Endothelial cell of umbilical vein (primary cell): ENCODE measurements at regions of chr9 and their contacts with region 1.

Region 1: GRCh38 chr9:16133556-16134227 is 580.8 kb downstream of the CCDC171 start:
- DNase-seq: peak; percentile 61
- H3K4me3 ChIP-seq: no peak overlapping the region
- H3K27ac ChIP-seq: no peak overlapping the region
- H3K4me1 ChIP-seq: no peaks in the 10 kb centered on the region
- H3K27me3 ChIP-seq: peaks cover 0 to 3% of the 10 kb centered on the region in 2 experiments
- CTCF ChIP-seq: peak; percentile 62 to 65
- POLR2A ChIP-seq: no peak

Region 2: DNA sequence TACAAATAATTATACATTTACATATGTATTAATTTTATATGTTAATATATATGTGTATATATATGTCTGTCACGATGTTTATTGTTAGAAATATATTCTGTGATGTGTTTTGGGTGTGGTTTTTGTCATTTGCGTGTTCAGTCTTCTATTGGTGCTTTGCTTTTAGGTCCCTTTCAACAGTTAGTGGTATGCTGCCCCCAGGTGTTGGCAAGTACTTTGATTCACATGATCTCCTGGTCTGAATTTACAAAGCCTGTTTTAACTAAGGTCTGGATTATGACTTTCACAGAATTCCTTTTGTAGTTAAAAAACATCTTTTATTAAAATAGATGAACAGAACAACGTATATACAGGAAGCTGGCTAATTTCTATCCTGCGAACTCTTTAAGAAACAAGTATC is 309.4 kb before region 1 on chr9:
- CTCF ChIA-PET with region 1: no interaction called
- POLR2A ChIA-PET with region 1: no interaction called
- dilution Hi-C with region 1: no loop called
- intact Hi-C with region 1: no loop called
- DNase-seq: peak; percentile 23
- H3K4me3 ChIP-seq: no peak overlapping the region
- H3K27ac ChIP-seq: no peak overlapping the region
- H3K4me1 ChIP-seq: no peaks in the 10 kb centered on the region
- H3K27me3 ChIP-seq: no peaks in the 10 kb centered on the region
- CTCF ChIP-seq: no peak
- POLR2A ChIP-seq: no peak

Region 3: GRCh38 chr9:15837079-15837679 is 296.5 kb before region 1 on chr9:
- CTCF ChIA-PET with region 1: interaction called, 25 read pairs
- POLR2A ChIA-PET with region 1: no interaction called
- dilution Hi-C with region 1: no loop called
- intact Hi-C with region 1: loop called (anchors 1 kb)
- DNase-seq: peak; percentile 50
- H3K4me3 ChIP-seq: no peak overlapping the region
- H3K27ac ChIP-seq: no peak overlapping the region
- H3K4me1 ChIP-seq: no peaks in the 10 kb centered on the region
- H3K27me3 ChIP-seq: no peaks in the 10 kb centered on the region
- CTCF ChIP-seq: peak; percentile 52 to 55
- POLR2A ChIP-seq: no peak

Region 4: GRCh38 chr9:15873569-15874177 is 260.0 kb before region 1 on chr9:
- CTCF ChIA-PET with region 1: interaction called, 78 read pairs
- POLR2A ChIA-PET with region 1: no interaction called
- dilution Hi-C with region 1: no loop called
- intact Hi-C with region 1: loop called (anchors 1 kb)
- DNase-seq: peak; percentile 55
- H3K4me3 ChIP-seq: no peak overlapping the region
- H3K27ac ChIP-seq: no peak overlapping the region
- H3K4me1 ChIP-seq: no peaks in the 10 kb centered on the region
- H3K27me3 ChIP-seq: no peaks in the 10 kb centered on the region
- CTCF ChIP-seq: peak; percentile 25 to 33
- POLR2A ChIP-seq: no peak

Region 5: DNA sequence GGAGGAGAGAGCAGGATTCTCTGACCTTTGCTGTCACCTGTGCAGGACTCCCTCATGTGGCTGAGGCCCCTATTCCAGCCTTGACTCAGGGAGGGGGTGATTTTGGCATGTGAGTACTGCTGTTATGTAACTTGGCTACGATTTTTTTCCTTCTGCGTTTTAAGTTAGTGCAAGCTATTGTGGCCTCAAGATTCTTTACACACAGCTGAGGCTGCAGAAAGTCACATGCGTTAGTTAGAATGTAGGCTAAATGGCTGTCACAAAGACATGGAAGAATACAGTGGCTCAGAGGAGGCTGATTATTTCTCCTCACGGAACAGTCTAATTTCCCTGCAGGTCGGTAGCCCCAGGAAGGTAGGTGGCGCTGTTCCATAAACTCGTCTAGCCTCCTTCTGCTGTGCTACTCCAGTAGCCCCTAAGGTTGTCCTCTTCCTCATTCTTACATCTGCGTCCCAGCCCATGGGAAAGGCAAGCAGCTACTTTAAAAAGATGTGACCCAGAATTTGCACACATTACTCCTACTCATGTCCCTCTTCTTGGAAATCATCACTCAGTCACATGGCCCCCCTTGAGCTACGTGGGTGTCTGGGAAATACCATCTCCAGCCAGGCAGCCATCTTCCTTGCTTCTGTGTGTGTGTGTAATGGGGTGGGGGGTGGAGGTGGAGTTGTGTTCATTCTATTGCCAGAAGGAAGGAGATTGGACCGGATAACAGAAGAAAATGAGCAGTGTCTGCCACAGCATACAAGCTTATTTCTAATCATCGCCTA is 94.3 kb before region 1 on chr9:
- CTCF ChIA-PET with region 1: interaction called, 11 read pairs
- POLR2A ChIA-PET with region 1: no interaction called
- dilution Hi-C with region 1: no loop called
- intact Hi-C with region 1: loop called (anchors 5 kb)
- DNase-seq: peak; percentile 5
- H3K4me3 ChIP-seq: no peak overlapping the region
- H3K27ac ChIP-seq: no peak overlapping the region
- H3K4me1 ChIP-seq: no peaks in the 10 kb centered on the region
- H3K27me3 ChIP-seq: peaks cover 0 to 4% of the 10 kb centered on the region in 2 experiments
- CTCF ChIP-seq: peak; percentile 6 to 30
- POLR2A ChIP-seq: no peak

Region 6: GRCh38 chr9:16121601-16122286 is 11.9 kb before region 1 on chr9:
- CTCF ChIA-PET with region 1: interaction called, 31 read pairs
- POLR2A ChIA-PET with region 1: no interaction called
- dilution Hi-C with region 1: no loop called
- intact Hi-C with region 1: no loop called
- DNase-seq: no peak
- H3K4me3 ChIP-seq: no peak overlapping the region
- H3K27ac ChIP-seq: no peak overlapping the region
- H3K4me1 ChIP-seq: no peaks in the 10 kb centered on the region
- H3K27me3 ChIP-seq: peaks cover 0 to 1% of the 10 kb centered on the region in 2 experiments
- CTCF ChIP-seq: no peak
- POLR2A ChIP-seq: no peak

Region 7: DNA sequence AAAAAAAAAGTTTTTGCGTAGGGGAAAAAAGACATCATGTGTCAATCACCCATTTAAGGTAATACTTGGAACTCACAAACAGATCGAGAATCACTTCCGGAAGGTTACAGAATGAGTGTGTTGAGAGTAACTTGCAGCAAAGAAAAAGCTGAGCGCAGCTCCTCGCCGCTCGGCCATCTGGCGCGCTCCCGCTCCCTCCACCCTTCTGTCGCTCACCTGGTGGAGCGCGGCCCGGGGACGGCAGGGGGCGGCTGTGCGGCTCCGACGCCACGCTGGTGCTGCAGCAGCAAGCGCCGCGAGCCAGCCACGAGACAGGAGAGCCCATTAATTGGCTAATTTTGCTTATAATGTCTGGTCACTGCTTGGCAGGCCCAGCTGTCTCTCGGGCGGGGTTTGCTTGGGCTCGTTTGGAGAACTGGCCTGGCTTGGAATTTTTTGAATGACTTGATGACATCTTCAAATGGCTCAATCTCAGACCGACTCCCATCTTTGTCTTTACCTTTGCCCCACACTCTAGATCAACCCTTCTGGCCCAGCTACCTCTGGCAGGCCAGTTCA is 20.9 kb after region 1 on chr9:
- CTCF ChIA-PET with region 1: interaction called, 12 read pairs
- POLR2A ChIA-PET with region 1: no interaction called
- dilution Hi-C with region 1: no loop called
- intact Hi-C with region 1: no loop called
- DNase-seq: peak; percentile 40
- H3K4me3 ChIP-seq: no peak overlapping the region
- H3K27ac ChIP-seq: no peak overlapping the region
- H3K4me1 ChIP-seq: peaks cover 5% of the 10 kb centered on the region
- H3K27me3 ChIP-seq: peaks cover 5 to 7% of the 10 kb centered on the region in 2 experiments
- CTCF ChIP-seq: peak; percentile 43 to 69
- POLR2A ChIP-seq: no peak

Region 8: GRCh38 chr9:16294133-16294770 is 160.6 kb after region 1 on chr9:
- CTCF ChIA-PET with region 1: no interaction called
- POLR2A ChIA-PET with region 1: no interaction called
- dilution Hi-C with region 1: no loop called
- intact Hi-C with region 1: no loop called
- DNase-seq: no peak
- H3K4me3 ChIP-seq: no peak overlapping the region
- H3K27ac ChIP-seq: no peak overlapping the region
- H3K4me1 ChIP-seq: no peaks in the 10 kb centered on the region
- H3K27me3 ChIP-seq: peaks cover 0 to 4% of the 10 kb centered on the region in 2 experiments
- CTCF ChIP-seq: no peak
- POLR2A ChIP-seq: no peak